GM12878 (cell line): ENCODE measurements at regions of chr12 and their contacts with region 1.

Region 1: DNA sequence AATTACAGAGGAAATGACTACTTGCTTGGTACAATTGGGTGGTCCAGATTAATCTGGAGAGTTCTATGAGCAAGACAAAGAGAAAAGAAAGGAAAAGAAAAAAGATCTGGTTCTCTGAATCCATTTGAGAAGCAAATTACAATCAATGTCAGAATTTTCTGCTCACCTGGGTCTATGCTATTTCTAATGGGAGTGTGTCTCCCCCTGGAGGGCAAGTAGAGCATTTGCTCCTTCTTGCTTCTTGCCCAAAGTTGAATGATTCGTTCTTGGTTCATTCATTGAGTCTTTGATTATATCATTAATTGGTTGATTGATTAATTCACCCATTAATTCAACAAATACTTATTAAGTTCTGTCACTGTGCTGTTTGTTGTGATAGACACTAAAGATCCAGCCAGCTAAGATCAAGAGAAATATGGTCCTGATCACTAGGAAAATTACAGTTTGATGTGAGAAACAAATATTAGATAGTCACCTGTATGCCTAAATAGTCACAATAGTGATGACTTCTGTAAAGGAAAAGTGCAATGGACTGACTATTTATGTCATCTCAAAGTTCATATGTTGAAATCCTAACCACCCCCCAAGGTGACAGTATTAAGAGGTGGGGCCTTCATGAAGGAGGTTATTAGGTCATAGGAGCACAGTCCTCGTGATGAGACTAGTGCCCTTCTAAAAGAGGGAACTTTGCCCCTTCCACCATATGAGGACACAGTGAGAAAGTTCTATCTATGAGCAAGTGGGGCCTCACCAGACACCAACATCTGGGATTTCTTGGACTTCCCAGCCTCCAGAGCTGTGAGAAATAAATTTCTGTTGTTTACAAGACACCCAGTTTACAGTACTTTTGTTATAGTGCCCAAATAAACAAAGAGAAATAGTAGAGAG is 8.0 kb upstream of the ASB8 start:
- DNase-seq: peak; percentile 45
- ATAC-seq: peak; percentile 82
- H3K4me3 ChIP-seq: no peak overlapping the region
- H3K27ac ChIP-seq: no peak overlapping the region
- H3K4me1 ChIP-seq: peaks cover 4% of the 10 kb centered on the region; the same call in 1 of the 2 replicates
- H3K27me3 ChIP-seq: peaks cover 0 to 2% of the 10 kb centered on the region in 2 experiments; a peak in 2 of 4 replicates
- CTCF ChIP-seq: peak; percentile 89 to 94 (median 93)
- EP300 ChIP-seq: no peak
- POLR2A ChIP-seq: no peak
- RAD21 ChIP-seq: peak; percentile 92

Region 2: GRCh38 chr12:48084066-48084465 is 81.3 kb before region 1 on chr12:
- CTCF ChIA-PET with region 1: interaction called, 38 read pairs
- POLR2A ChIA-PET with region 1: no interaction called
- RAD21 ChIA-PET with region 1: interaction called, 6 read pairs
- SMC1A ChIA-PET with region 1: interaction called, 4 read pairs
- in situ Hi-C with region 1: no loop called
- intact Hi-C with region 1: loop called (anchors 2 kb)
- DNase-seq: no peak
- ATAC-seq: no peak
- H3K4me3 ChIP-seq: no peak overlapping the region
- H3K27ac ChIP-seq: no peak overlapping the region
- H3K4me1 ChIP-seq: no peaks in the 10 kb centered on the region; the same call in 1 of the 2 replicates
- H3K27me3 ChIP-seq: no peaks in the 10 kb centered on the region; a peak in 1 of 4 replicates
- CTCF ChIP-seq: no peak; a peak in 1 of 6 replicates
- EP300 ChIP-seq: no peak
- POLR2A ChIP-seq: no peak
- RAD21 ChIP-seq: peak; percentile 28

Region 3: DNA sequence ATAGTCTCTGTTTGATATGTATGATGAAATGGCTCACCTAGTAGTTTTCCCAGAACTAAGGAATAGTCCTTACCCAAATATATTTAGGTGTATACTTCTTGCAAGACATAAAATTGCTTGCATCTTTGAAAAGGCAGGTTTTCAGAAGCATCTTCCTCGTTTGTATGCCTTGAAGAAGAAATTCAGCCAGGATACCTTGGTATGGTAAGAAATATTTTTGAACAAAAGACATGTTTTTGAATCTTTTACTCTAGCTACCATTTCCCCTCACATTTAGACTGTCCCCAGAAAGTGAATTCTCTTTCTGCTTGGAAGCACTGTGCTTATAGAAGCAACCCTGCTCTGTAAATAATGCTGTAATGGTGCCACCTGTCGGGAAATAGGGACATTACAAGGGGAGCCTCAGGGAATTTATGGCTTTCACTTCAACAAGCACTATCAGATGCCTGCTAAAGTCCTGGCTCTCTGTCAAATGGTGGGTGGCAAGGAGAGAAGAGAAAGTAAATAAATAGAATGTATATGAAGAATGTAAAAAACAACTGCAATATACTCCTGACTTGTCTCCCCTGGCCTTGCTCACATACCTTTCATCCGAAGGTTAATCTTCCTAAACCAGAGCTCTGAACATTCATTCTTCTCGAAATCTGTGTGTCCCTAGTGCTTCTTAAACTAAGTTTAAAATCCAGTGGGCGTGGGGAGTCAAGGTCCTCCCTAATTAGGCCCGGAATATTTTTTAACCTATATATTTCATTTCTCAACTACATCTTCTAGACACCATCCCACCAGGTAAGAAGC is 24.2 kb after region 1 on chr12:
- CTCF ChIA-PET with region 1: interaction called, 15 read pairs
- POLR2A ChIA-PET with region 1: no interaction called
- RAD21 ChIA-PET with region 1: no interaction called
- SMC1A ChIA-PET with region 1: interaction called, 3 read pairs
- in situ Hi-C with region 1: no loop called
- intact Hi-C with region 1: no loop called
- DNase-seq: peak; percentile 34
- ATAC-seq: peak; percentile 82
- H3K4me3 ChIP-seq: no peak overlapping the region
- H3K27ac ChIP-seq: no peak overlapping the region
- H3K4me1 ChIP-seq: no peaks in the 10 kb centered on the region; the same call in 1 of the 2 replicates
- H3K27me3 ChIP-seq: peaks cover 4 to 6% of the 10 kb centered on the region in 2 experiments
- CTCF ChIP-seq: peak; percentile 77 to 92 (median 83)
- EP300 ChIP-seq: no peak
- POLR2A ChIP-seq: no peak
- RAD21 ChIP-seq: peak; percentile 84